ENCODE measurements at regions of chr19 and their contacts with region 1.

Region 1: DNA sequence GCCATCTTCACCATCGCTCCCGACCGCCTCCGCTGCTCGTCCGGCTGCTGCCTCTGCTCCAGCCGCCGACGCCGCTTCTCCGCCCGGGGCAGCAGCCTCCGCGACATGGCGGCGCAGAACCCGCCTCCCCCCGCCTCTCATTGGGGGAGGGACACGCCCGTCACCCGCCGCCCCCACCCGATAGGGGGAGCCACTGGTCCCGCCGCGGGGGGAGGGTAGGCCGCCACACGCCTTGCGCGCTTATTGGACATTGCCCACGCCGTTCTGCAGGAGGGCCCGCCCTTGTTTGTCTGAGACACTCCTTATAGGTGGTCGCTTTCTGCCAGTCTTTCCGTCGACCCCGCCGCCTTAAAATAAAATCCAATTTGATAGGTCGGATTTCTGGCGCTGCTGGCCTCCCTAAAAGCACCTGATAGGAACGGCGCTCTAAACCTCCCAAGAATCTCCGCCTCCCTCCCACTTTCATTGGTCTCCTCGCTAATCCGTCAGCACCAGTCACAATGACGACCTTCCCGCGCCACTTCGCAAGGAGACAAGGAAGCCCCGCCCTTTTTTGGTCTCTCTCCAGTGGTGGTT is at the start of gene HNRNPL:
- DNase-seq: peak; percentile 98 to 100 (median 99)
- ATAC-seq: peak; percentile 66 to 69
- H3K4me3 Mint-ChIP-seq: peak within 1 kb of the TSS; percentile 92 to 99 (median 95)
- H3K27ac Mint-ChIP-seq: peak within 1 kb of the TSS; percentile 95 to 100 (median 99)
- H3K4me1 Mint-ChIP-seq: peaks cover 28 to 61% (median 57%) of the 10 kb centered on the region in 4 donors
- H3K27me3 Mint-ChIP-seq: peaks cover 0 to 3% (median 0%) of the 10 kb centered on the region in 5 donors
- polyA plus RNA-seq, gene HNRNPL: 70.6 to 77.6 (median 71.4) TPM

Region 2: DNA sequence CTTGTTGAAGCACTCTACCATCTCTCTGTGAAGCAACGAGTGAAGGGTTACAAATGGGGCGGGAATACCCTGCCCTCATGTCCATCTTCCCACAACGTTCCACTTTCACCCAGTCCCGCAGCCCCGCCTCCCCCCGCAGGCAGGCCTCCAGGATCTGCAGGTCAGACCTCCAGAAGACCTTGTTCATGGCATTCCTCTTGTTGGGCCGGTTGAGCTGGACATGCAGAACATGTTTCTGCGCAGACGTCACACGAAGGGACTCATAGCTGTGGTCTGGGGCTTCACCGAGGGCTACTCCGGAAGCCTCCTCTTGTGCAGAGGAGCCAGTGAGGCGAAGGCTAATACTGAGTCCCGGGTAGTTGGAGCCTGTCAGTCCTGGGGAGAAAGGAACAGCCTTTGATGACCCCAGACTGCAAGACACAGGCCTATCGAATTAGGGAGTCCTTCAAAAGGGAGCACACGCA is 18.8 kb before region 1 on chr19:
- POLR2A ChIA-PET with region 1: interaction called, 88 read pairs
- DNase-seq: peak in 1 of 10 donors; percentile 13
- ATAC-seq: no peak
- H3K4me3 Mint-ChIP-seq: peak overlapping the region; percentile 90 to 97 (median 94)
- H3K27ac Mint-ChIP-seq: peak overlapping the region; percentile 87 to 99 (median 96)
- H3K4me1 Mint-ChIP-seq: peaks cover 9 to 53% (median 44%) of the 10 kb centered on the region in 4 donors
- H3K27me3 Mint-ChIP-seq: no peaks in the 10 kb centered on the region

Region 3: DNA sequence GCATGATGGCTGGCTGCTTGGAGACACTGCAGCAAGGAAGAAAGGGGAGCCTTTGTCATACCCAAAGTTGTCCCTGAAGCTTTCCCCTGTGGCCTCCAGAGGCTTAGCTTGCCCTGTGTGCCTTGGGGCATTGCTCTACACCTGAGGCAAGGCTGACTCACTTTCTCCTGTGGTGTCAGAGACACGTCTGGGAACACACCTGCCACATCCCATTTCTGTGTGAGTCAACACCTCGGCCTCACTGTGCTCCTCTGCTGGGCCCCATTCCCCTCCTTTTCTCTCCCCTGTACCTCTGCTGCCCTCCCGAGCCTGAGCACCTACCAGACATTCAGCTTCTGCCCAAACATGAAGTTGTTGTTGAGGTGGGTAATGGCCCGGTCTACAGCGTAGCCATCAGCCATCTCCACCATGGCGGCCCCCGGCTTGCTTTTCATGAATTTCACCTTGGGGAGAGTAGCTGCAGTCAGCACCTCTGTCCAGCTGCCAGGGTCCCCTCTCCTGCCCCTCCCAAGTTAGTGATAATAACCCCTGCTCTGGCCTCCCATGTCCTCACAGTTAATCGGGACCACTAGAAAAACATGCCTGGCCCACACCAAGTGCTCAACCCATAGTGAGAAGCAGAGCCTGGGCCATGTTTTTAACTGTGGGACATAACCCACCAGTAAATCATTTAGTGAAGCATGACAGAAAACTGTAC is 11.2 kb before region 1 on chr19:
- POLR2A ChIA-PET with region 1: interaction called, 88 read pairs
- DNase-seq: no peak
- ATAC-seq: no peak
- H3K4me3 Mint-ChIP-seq: no peak overlapping the region
- H3K27ac Mint-ChIP-seq: peak overlapping the region in 8 of 10 donors; percentile 20 to 92 (median 54)
- H3K4me1 Mint-ChIP-seq: peaks cover 23 to 53% (median 50%) of the 10 kb centered on the region in 4 donors
- H3K27me3 Mint-ChIP-seq: peaks cover 0 to 5% (median 0%) of the 10 kb centered on the region in 5 donors

Region 4: GRCh38 chr19:38869856-38870607 is 20.1 kb after region 1 on chr19:
- POLR2A ChIA-PET with region 1: interaction called, 302 read pairs
- DNase-seq: peak; percentile 91 to 97 (median 94)
- ATAC-seq: peak; percentile 94 to 95
- H3K4me3 Mint-ChIP-seq: peak overlapping the region; percentile 85 to 98 (median 92)
- H3K27ac Mint-ChIP-seq: peak overlapping the region; percentile 83 to 97 (median 92)
- H3K4me1 Mint-ChIP-seq: peaks cover 21 to 60% (median 55%) of the 10 kb centered on the region in 4 donors
- H3K27me3 Mint-ChIP-seq: no peaks in the 10 kb centered on the region

Region 5: DNA sequence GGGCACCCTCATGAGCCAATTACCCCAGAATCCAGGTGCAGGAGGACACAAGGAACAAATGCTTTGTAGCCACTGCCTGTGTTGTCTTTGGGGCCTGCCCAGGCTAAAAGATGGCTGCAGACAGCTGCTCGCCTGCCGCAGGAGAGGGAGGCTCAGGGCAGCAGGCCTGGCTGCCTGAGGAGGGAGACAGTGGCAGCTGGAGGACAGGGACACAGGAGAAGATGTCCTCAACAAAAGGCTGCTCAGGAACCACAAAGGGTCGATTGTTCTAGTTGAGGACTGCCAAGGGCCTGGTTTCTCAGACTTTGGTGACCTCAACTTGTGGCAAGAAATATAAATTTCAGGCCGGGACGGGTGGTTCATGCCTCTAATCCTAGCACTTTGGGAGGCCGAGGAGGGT is 41.8 kb after region 1 on chr19:
- POLR2A ChIA-PET with region 1: interaction called, 13 read pairs
- DNase-seq: no peak
- ATAC-seq: no peak
- H3K4me3 Mint-ChIP-seq: no peak overlapping the region
- H3K27ac Mint-ChIP-seq: no peak overlapping the region
- H3K4me1 Mint-ChIP-seq: peaks cover 4 to 16% (median 11%) of the 10 kb centered on the region in 4 donors
- H3K27me3 Mint-ChIP-seq: no peaks in the 10 kb centered on the region

Region 6: GRCh38 chr19:38899447-38900219 is 49.7 kb after region 1 on chr19 and contains the starts of genes NFKBIB and SIRT2:
- POLR2A ChIA-PET with region 1: interaction called, 11 read pairs
- DNase-seq: peak; percentile 91 to 100 (median 99)
- ATAC-seq: peak; percentile 89
- H3K4me3 Mint-ChIP-seq: peak within 1 kb of the TSS; percentile 86 to 100 (median 97)
- H3K27ac Mint-ChIP-seq: peak within 1 kb of the TSS; percentile 93 to 100 (median 99)
- H3K4me1 Mint-ChIP-seq: peaks cover 22 to 61% (median 55%) of the 10 kb centered on the region in 4 donors
- H3K27me3 Mint-ChIP-seq: no peaks in the 10 kb centered on the region
- polyA plus RNA-seq, gene NFKBIB: 7.9 to 12.9 (median 9.5) TPM
- polyA plus RNA-seq, gene SIRT2: 28.2 to 48.0 (median 33.5) TPM

Measured in naive thymus-derived CD8-positive, alpha-beta T cell (primary cell).